ENCODE measurements at regions of chr4 and their contacts with region 1.

Region 1: GRCh38 chr4:56977321-56978012 is at the start of gene NOA1:
- DNase-seq: peak; percentile 98
- H3K4me3 Mint-ChIP-seq: peak within 1 kb of the TSS; percentile 100
- H3K27ac Mint-ChIP-seq: peak within 1 kb of the TSS; percentile 100
- H3K4me1 Mint-ChIP-seq: peaks cover 51% of the 10 kb centered on the region
- H3K27me3 Mint-ChIP-seq: no peaks in the 10 kb centered on the region
- total RNA-seq, gene NOA1: 17.7 and 18.3 TPM in 2 replicates

Region 2: DNA sequence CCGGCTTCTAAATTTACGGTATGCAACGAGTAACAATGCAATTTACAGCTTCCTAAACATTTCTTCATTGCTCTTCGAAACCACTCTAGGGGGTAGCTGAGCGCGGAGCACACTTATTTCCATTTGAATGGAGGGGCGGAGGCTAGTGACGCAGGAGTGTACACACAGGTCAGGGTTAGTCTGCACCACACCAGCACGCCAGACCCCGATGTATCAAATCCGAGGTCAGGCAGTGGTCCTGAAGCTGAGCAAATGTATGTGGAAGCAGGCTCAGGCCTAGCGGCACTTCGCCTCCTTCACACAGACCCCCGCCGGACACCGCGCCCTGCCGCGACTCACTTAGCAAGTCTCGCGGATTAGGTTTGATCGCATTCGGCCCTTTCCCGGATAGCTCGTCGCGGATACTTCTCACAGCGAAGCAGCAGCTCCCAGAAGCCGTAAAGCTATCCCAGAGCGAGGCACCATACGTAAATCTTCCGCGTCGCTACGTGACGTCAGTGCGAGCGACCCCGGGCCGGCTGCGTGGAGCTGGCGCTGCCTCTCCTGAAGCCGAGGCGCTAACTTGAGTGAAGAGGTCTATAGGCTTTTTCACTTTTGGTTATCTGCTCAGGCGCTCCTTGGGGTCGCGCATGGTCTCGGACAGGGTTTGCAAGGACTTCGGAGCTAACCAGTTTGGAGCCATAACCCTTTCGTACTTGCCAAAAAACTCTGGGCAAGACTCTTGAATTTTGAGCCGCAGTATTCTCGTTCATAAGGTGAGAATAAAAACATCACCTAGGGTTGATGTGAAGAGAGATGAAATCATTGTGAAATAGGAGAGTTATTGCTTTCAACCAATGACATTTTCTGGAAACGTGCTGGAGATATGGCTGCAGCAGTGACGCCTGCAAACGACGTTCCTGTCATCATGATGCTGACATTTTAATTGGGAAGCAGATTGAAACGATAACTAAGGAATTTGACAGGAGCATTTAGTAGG is 590.2 kb before region 1 on chr4 and contains the start of gene AASDH:
- intact Hi-C with region 1: loop called (anchors 1 kb)
- DNase-seq: peak; percentile 93
- H3K4me3 Mint-ChIP-seq: peak within 1 kb of the TSS; percentile 92
- H3K27ac Mint-ChIP-seq: peak within 1 kb of the TSS; percentile 97
- H3K4me1 Mint-ChIP-seq: peaks cover 26% of the 10 kb centered on the region
- H3K27me3 Mint-ChIP-seq: no peaks in the 10 kb centered on the region
- total RNA-seq, gene AASDH: 9.8 and 12.0 TPM in 2 replicates